WTC11 (cell line): ENCODE measurements at regions of chr2 and their contacts with region 1.

Region 1: DNA sequence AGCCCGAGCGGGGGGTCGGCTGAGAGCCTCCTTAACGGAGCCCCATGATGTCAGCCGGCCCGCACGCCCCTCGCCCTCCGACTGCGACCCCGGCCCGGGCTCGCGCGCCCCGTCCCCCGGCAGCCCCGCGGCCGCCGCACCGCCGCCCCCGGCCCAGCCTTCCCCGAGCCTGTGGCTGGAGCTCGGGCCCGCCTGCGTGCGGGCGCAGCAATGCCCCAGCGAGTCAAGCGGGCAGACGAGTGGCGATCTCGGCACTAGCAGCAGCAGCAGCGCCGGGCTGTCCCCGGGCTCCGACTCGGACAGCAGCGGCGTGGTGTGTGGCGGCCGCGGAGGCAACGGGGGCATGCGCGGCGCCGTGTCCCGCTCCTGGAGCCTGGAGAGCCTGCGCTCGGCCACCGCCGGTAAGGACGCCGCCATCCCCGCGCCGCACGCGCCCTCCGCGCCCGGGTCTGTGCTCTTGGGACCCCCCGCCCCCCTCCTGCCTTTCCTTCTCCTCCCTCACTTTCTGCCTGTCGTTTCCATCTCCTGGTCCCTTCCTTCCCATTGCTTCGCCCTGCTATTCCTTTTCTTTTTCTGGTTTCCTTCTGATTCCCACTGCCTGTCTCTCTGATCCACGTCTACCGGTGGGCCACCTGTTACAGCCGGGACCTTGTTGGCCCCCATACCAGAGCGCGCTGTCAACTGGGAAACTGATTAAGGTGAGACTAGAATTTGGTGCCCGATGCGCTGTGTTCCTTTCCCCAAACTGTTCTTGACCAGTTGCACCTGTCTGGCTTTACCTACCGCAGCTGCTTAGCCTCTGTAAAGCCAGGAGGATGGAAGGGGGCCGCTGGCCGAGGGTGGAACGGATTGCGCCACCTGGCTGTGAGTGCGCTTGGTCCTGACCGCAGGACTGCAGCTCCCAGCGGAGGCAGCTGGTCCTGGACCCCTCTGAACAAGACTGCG is 127.4 kb downstream of the ARHGEF4 start:
- DNase-seq: peak; percentile 83
- ATAC-seq: peak; percentile 81
- H3K4me3 Mint-ChIP-seq: peak overlapping the region; percentile 77
- H3K27ac Mint-ChIP-seq: no peak overlapping the region
- H3K4me1 Mint-ChIP-seq: peaks cover 46% of the 10 kb centered on the region
- H3K27me3 Mint-ChIP-seq: peaks cover 57% of the 10 kb centered on the region
- CTCF ChIP-seq: no peak

Region 2: GRCh38 chr2:130928385-130928784 is 35.7 kb before region 1 on chr2:
- CTCF ChIA-PET with region 1: interaction called, 17 read pairs
- POLR2A ChIA-PET with region 1: no interaction called
- DNase-seq: no peak
- ATAC-seq: peak; percentile 91
- H3K4me3 Mint-ChIP-seq: no peak overlapping the region
- H3K27ac Mint-ChIP-seq: no peak overlapping the region
- H3K4me1 Mint-ChIP-seq: peaks cover 12% of the 10 kb centered on the region
- H3K27me3 Mint-ChIP-seq: peaks cover 8% of the 10 kb centered on the region
- CTCF ChIP-seq: no peak

Region 3: GRCh38 chr2:130996691-130997090 is 32.6 kb after region 1 on chr2:
- CTCF ChIA-PET with region 1: interaction called, 13 read pairs
- POLR2A ChIA-PET with region 1: no interaction called
- DNase-seq: no peak
- ATAC-seq: no peak
- H3K4me3 Mint-ChIP-seq: no peak overlapping the region
- H3K27ac Mint-ChIP-seq: no peak overlapping the region
- H3K4me1 Mint-ChIP-seq: peaks cover 6% of the 10 kb centered on the region
- H3K27me3 Mint-ChIP-seq: no peaks in the 10 kb centered on the region
- CTCF ChIP-seq: no peak

Region 4: DNA sequence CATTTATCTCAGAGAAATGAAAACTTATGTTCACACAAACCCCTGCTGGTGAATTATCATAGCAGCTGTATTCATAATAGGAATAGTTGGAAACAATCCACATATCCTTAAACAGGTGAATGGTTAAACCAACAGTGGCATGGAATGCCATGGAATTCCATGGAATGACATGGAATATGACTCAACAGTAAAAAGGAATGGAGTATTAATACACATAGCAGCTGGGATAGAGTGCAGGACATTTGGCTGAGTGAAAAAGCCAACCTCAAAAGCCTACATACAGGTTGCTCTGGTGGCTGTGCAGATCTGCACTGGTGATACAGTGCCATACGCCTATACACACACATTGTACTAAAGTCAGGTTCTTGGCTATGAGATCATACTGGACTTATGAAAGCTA is 59.6 kb after region 1 on chr2:
- CTCF ChIA-PET with region 1: no interaction called
- POLR2A ChIA-PET with region 1: no interaction called
- DNase-seq: no peak
- ATAC-seq: no peak
- H3K4me3 Mint-ChIP-seq: no peak overlapping the region
- H3K27ac Mint-ChIP-seq: no peak overlapping the region
- H3K4me1 Mint-ChIP-seq: no peaks in the 10 kb centered on the region
- H3K27me3 Mint-ChIP-seq: no peaks in the 10 kb centered on the region
- CTCF ChIP-seq: no peak

Region 5: DNA sequence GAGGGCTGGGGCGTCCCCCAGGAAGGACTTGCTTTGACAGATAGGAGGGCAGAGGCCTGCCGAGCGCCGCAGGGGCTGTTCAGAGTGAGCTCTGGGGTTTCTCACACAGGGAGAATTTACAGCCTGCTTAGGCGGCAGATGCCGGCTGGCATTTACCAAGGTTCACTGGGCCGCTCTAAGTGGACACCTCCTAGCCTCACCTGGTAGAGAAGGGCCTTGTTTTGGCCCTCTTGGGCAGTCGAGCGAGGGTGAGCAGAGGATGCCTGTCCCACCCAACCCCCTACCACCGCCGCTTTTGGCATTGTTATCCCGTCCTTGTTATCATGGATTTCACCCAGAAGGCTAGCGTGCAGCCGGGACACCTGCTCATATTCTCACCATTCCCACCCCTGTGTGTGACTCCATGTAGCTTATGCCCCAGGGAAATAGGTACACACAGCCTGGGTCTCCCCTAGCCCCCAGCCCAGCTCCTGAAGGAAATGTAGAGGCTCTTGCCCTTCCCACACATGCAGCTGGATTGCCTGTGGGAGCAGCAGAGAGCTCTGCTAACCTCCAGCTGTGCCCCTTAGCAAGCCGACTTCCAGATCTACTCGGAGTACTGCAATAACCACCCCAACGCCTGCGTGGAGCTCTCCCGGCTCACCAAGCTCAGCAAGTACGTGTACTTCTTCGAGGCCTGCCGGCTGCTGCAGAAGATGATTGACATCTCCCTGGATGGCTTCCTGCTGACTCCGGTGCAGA is 76.7 kb after region 1 on chr2:
- CTCF ChIA-PET with region 1: interaction called, 11 read pairs
- POLR2A ChIA-PET with region 1: no interaction called
- DNase-seq: no peak
- ATAC-seq: peak; percentile 60
- H3K4me3 Mint-ChIP-seq: no peak overlapping the region
- H3K27ac Mint-ChIP-seq: no peak overlapping the region; the same call in 1 of the 2 replicates
- H3K4me1 Mint-ChIP-seq: peaks cover 9% of the 10 kb centered on the region
- H3K27me3 Mint-ChIP-seq: peaks cover 10% of the 10 kb centered on the region
- CTCF ChIP-seq: no peak